SK-N-SH (cell line): ENCODE measurements at regions of chr20 and their contacts with region 1.

Region 1: GRCh38 chr20:62793912-62794724 is 2.2 kb upstream of the MRGBP start:
- DNase-seq: peak; percentile 95
- H3K4me3 ChIP-seq: peak overlapping the region; percentile 64 to 74
- H3K27ac ChIP-seq: peak overlapping the region; percentile 71 to 88
- H3K4me1 ChIP-seq: peaks cover 22 to 23% of the 10 kb centered on the region in 2 experiments; a peak in 3 of 4 replicates
- H3K27me3 ChIP-seq: no peaks in the 10 kb centered on the region
- CTCF ChIP-seq: no peak
- EP300 ChIP-seq: no peak
- RAD21 ChIP-seq: no peak

Region 2: DNA sequence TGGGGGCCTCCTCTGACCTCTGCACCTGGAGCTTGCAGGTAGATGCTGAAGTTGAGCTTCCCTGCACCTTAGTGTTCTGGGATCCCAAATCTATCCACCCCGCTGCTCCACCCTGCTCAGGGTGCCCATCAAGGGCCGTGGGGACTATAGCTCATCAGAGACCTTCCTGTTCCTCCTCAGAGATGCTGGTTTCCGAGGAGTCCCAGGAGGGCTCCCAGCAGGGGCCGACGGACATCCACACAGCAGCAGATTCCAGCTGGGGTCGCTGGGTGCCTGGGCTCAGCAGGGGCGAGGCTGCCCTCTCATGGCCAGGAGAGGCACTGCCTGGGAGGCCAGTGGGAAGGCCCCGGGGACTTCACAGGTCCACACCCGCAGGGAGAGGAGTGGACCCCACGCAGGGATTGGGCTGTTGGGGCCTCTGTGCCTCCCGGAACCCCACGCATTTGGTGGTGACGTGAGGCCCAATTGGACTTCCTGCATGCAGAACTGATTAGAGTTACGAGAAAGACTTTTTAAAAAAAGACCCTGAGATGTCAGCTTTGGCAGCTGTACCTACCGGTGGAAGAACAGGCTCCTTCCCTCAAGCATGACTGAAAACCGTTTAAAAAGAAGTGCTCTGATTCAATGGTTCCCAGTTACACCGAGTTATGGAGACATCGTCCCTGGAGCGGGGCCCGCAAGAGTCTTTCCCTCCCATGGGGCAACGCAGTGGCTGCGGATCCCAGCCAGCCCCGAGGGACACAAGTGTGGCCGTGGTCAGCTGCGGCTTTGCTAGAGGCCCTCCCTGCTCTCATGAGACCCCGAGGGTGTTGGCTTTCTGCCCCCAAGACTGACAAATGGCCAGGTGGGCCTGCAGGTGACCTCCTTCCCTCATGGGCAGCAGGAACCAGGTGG is 177.1 kb before region 1 on chr20:
- CTCF ChIA-PET with region 1: interaction called, 20 read pairs
- POLR2A ChIA-PET with region 1: no interaction called
- DNase-seq: peak; percentile 95
- H3K4me3 ChIP-seq: no peak overlapping the region; a peak in 1 of 4 replicates
- H3K27ac ChIP-seq: no peak overlapping the region
- H3K4me1 ChIP-seq: peaks cover 0 to 3% of the 10 kb centered on the region in 2 experiments; a peak in 1 of 4 replicates
- H3K27me3 ChIP-seq: no peaks in the 10 kb centered on the region
- CTCF ChIP-seq: peak; percentile 90
- EP300 ChIP-seq: peak in 1 of 2 experiments; percentile 18; a peak in 1 of 4 replicates
- RAD21 ChIP-seq: peak; percentile 96

Region 3: GRCh38 chr20:62652051-62652926 is 141.8 kb before region 1 on chr20:
- CTCF ChIA-PET with region 1: interaction called, 66 read pairs
- POLR2A ChIA-PET with region 1: interaction called, 4 read pairs
- DNase-seq: peak; percentile 70
- H3K4me3 ChIP-seq: peak overlapping the region in 1 of 2 experiments; percentile 19; a peak in 1 of 4 replicates
- H3K27ac ChIP-seq: peak overlapping the region in 1 of 2 experiments; percentile 99; a peak in 2 of 4 replicates
- H3K4me1 ChIP-seq: peaks cover 0 to 71% of the 10 kb centered on the region in 2 experiments; a peak in 3 of 4 replicates
- H3K27me3 ChIP-seq: no peaks in the 10 kb centered on the region
- CTCF ChIP-seq: no peak
- EP300 ChIP-seq: no peak
- RAD21 ChIP-seq: no peak

Region 4: GRCh38 chr20:62688855-62689460 is 105.2 kb before region 1 on chr20:
- CTCF ChIA-PET with region 1: interaction called, 20 read pairs
- POLR2A ChIA-PET with region 1: no interaction called
- DNase-seq: no peak
- H3K4me3 ChIP-seq: no peak overlapping the region
- H3K27ac ChIP-seq: no peak overlapping the region
- H3K4me1 ChIP-seq: peaks cover 0 to 20% of the 10 kb centered on the region in 2 experiments; a peak in 2 of 4 replicates
- H3K27me3 ChIP-seq: no peaks in the 10 kb centered on the region
- CTCF ChIP-seq: peak; percentile 35
- EP300 ChIP-seq: no peak
- RAD21 ChIP-seq: no peak

Region 5: GRCh38 chr20:62734881-62735821 is 59.0 kb before region 1 on chr20:
- CTCF ChIA-PET with region 1: interaction called, 17 read pairs
- POLR2A ChIA-PET with region 1: no interaction called
- DNase-seq: no peak
- H3K4me3 ChIP-seq: no peak overlapping the region
- H3K27ac ChIP-seq: no peak overlapping the region
- H3K4me1 ChIP-seq: peaks cover 7 to 17% of the 10 kb centered on the region in 2 experiments; a peak in 3 of 4 replicates
- H3K27me3 ChIP-seq: no peaks in the 10 kb centered on the region
- CTCF ChIP-seq: no peak
- EP300 ChIP-seq: no peak
- RAD21 ChIP-seq: no peak

Region 6: GRCh38 chr20:62808211-62808865 is 14.2 kb after region 1 on chr20:
- CTCF ChIA-PET with region 1: interaction called, 34 read pairs
- POLR2A ChIA-PET with region 1: interaction called, 3 read pairs
- DNase-seq: peak; percentile 93
- H3K4me3 ChIP-seq: peak overlapping the region in 1 of 2 experiments; percentile 44; a peak in 1 of 4 replicates
- H3K27ac ChIP-seq: no peak overlapping the region
- H3K4me1 ChIP-seq: peaks cover 10 to 27% of the 10 kb centered on the region in 2 experiments; a peak in 2 of 4 replicates
- H3K27me3 ChIP-seq: no peaks in the 10 kb centered on the region
- CTCF ChIP-seq: peak; percentile 93
- EP300 ChIP-seq: no peak
- RAD21 ChIP-seq: peak; percentile 74